Activated CD4-positive, alpha-beta memory T cell treated with anti-CD3 and anti-CD28 coated beads for 36 hours (primary cell): ENCODE measurements at regions of chr5 and their contacts with region 1.

Region 1: GRCh38 chr5:141641634-141642267 is 5.0 kb downstream of the RELL2 start:
- DNase-seq: peak; percentile 35
- H3K4me3 Mint-ChIP-seq: no peak overlapping the region
- H3K27ac Mint-ChIP-seq: peak overlapping the region; percentile 40
- H3K4me1 Mint-ChIP-seq: peaks cover 29% of the 10 kb centered on the region
- H3K27me3 Mint-ChIP-seq: no peaks in the 10 kb centered on the region

Region 2: DNA sequence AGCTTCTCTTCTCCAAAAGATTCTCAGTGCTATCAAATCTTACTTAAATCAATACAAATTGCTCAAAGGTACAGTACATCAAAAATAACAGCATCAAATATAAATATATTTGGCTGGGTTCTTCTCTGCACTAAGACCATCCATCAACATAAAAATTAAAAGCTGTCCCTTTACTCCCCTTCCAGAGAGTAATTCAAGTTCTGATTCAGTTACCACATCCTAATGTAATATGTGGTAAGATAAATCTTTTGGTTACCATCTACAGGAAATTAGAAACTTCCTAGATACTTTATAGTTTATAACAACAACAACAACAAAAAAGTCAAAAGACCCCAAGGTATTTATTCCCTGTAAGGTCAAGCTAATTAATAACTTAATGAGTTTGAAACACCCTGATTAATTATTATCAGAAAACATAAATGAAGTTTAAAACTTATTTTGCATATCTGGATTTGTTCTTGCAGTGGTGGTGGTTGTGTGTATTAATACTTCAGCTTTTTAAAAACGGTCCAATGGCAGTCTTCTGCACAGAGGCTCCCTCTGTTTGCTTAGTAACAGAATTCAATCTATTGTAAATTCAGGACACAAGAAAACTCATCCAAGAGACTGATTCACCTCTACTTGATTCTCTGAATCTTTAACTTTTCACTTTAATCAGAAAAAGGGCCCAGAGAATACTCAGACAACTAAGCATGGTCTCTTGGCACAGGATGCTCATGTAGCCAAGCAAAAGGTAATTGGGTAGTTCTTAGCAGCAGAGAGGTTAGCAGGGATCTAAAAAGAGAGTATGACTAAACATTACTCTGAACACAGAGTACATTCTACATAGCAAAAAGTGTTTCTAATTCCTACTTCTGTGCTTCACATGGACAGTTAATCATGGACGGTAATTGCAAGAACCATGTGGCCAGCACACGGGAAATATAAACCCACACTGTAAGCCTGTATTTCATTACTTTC is 43.1 kb before region 1 on chr5:
- CTCF ChIA-PET with region 1: interaction called, 120 read pairs
- POLR2A ChIA-PET with region 1: interaction called, 10 read pairs
- intact Hi-C with region 1: loop called (anchors 2 kb)
- DNase-seq: no peak
- H3K4me3 Mint-ChIP-seq: no peak overlapping the region
- H3K27ac Mint-ChIP-seq: peak overlapping the region; percentile 84
- H3K4me1 Mint-ChIP-seq: peaks cover 73% of the 10 kb centered on the region
- H3K27me3 Mint-ChIP-seq: no peaks in the 10 kb centered on the region

Region 3: DNA sequence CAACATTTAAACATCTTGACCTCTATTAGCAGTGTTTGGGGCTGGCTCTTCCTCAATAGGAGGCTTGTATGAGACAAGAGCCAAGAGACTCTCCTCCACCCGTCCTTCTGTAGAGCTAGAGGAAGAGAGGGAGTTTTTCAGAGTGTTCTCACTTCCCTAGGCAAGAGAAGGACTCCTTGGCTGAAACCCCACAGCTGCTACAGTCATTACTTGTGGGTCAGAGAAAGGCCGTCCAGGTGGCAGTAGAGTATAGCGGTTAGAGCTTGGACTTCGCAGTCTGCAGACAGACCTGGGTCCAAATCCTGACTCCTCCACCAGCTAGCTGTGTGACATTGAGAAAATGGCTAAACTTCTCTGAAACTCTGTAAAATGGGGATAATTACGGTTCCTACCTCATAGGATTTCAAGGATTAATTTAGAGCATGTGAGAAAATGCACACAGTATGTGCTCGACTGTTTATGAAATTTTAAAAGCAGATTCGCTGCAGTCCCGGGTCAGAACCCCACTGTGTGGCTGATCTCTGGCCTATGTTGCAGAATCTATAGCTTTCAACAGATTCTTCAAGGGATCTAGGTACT is 121.1 kb after region 1 on chr5:
- CTCF ChIA-PET with region 1: no interaction called
- POLR2A ChIA-PET with region 1: no interaction called
- intact Hi-C with region 1: no loop called
- DNase-seq: no peak
- H3K4me3 Mint-ChIP-seq: no peak overlapping the region
- H3K27ac Mint-ChIP-seq: no peak overlapping the region
- H3K4me1 Mint-ChIP-seq: peaks cover 5% of the 10 kb centered on the region
- H3K27me3 Mint-ChIP-seq: peaks cover 26% of the 10 kb centered on the region